ENCODE measurements at regions of chr4 and their contacts with region 1.

Region 1: GRCh38 chr4:162535121-162535520 is 371.3 kb upstream of the FSTL5 start:
- DNase-seq: no peak
- ATAC-seq: no peak
- H3K4me3 ChIP-seq: no peak overlapping the region
- H3K4me3 Mint-ChIP-seq: no peak overlapping the region
- H3K27ac ChIP-seq: no peak overlapping the region
- H3K27ac Mint-ChIP-seq: no peak overlapping the region
- H3K4me1 ChIP-seq: no peaks in the 10 kb centered on the region
- H3K4me1 Mint-ChIP-seq: no peaks in the 10 kb centered on the region
- H3K27me3 ChIP-seq: no peaks in the 10 kb centered on the region
- H3K27me3 Mint-ChIP-seq: no peaks in the 10 kb centered on the region

Region 2: DNA sequence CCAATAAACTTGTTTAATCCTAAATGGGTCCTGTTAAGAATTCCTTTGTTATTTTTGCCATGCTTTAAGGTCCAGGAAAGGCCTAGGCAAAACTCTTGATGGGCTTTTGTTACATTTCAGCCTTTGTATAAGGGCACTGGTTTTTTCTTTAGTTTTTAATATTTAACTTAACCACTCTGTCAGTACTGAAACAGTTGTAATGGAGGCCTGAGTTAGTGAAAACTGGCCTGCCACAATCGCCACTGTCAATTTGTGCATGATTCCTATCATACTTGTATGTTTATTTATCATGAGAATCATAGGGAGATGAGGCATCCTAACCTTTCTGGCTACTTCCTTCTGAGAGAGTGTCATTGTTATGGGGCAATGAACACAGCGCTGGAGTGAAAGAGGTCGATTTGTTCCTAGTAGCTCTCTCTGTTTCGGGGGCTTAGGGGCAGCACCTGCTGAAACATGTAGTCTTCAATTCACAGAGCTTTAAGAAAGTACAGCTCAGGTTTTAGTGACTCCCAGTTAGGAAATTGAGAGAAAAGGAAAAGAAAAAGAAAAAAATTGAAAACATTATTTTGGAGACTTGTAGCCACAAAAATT is 22.5 kb after region 1 on chr4:
- CTCF ChIA-PET with region 1: no interaction called
- POLR2A ChIA-PET with region 1: interaction called in 1 of 2 experiments, 16 read pairs
- DNase-seq: no peak
- ATAC-seq: no peak
- H3K4me3 ChIP-seq: no peak overlapping the region
- H3K4me3 Mint-ChIP-seq: no peak overlapping the region
- H3K27ac ChIP-seq: no peak overlapping the region
- H3K27ac Mint-ChIP-seq: no peak overlapping the region
- H3K4me1 ChIP-seq: no peaks in the 10 kb centered on the region
- H3K4me1 Mint-ChIP-seq: no peaks in the 10 kb centered on the region
- H3K27me3 ChIP-seq: no peaks in the 10 kb centered on the region
- H3K27me3 Mint-ChIP-seq: no peaks in the 10 kb centered on the region

Region 3: GRCh38 chr4:162610116-162610515 is 75.0 kb after region 1 on chr4:
- CTCF ChIA-PET with region 1: no interaction called
- POLR2A ChIA-PET with region 1: no interaction called
- DNase-seq: no peak
- ATAC-seq: no peak
- H3K4me3 ChIP-seq: no peak overlapping the region
- H3K4me3 Mint-ChIP-seq: no peak overlapping the region
- H3K27ac ChIP-seq: no peak overlapping the region
- H3K27ac Mint-ChIP-seq: no peak overlapping the region
- H3K4me1 ChIP-seq: no peaks in the 10 kb centered on the region
- H3K4me1 Mint-ChIP-seq: no peaks in the 10 kb centered on the region
- H3K27me3 ChIP-seq: no peaks in the 10 kb centered on the region
- H3K27me3 Mint-ChIP-seq: no peaks in the 10 kb centered on the region

Measured in T-cell (primary cell).